Lower leg skin (tissue), 4 donors: ENCODE measurements at regions of chr6 and their contacts with region 1.

Region 1: GRCh38 chr6:144008120-144008811 is at the start of gene PLAGL1:
- DNase-seq: peak; percentile 53 to 92
- H3K4me3 ChIP-seq: peak within 1 kb of the TSS; percentile 36
- CTCF ChIP-seq: no peak
- POLR2A ChIP-seq: no peak
- total RNA-seq, gene PLAGL1: 21.7 to 39.2 (median 27.8) TPM

Region 2: DNA sequence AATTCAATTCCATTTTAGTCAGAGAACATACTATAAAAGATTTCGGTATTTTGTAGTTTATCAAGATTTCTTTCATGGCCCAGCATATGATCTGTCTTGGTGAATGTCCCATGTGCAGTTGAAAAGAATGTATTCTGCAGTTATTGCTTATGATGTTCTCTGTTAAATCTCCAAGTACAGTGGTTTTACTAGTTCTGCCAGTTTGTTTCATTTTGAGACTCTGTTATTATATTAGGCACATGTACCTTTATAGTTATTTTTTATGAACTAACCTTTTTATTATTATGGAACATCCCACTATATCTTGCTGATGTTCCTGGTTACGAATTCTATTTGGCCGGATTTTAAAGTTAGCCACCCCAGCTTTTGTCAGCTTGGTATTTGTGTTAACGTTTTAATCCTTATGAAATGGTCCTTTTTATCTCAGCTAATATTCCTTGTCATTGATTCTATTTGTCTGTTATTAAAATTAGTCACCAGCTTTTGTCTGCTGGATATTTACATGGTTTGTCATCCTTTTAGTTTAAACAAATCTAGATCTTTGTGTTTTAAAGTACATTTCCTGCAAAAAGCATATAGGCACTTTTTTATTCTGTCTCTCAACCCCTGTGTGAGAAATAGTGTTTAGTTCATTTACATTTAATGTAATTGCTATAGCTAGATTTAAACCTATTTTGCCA is 1812.3 kb before region 1 on chr6:
- intact Hi-C with region 1: loop called (anchors 5 kb)
- DNase-seq: no peak
- H3K4me3 ChIP-seq: no peak overlapping the region
- CTCF ChIP-seq: no peak
- POLR2A ChIP-seq: no peak